Spleen (tissue), 13 donors: ENCODE measurements at regions of chr9 and their contacts with region 1.

Region 1: GRCh38 chr9:134325817-134326723 is at the start of gene RXRA:
- DNase-seq: peak; percentile 94
- H3K4me3 ChIP-seq: peak within 1 kb of the TSS; percentile 53 to 86 (median 68)
- H3K27ac ChIP-seq: peak within 1 kb of the TSS; percentile 58 to 93 (median 88)
- H3K4me1 ChIP-seq: peaks cover 12 to 78% (median 56%) of the 10 kb centered on the region in 6 donors
- H3K27me3 ChIP-seq: peaks cover 0 to 6% (median 0%) of the 10 kb centered on the region in 7 donors
- CTCF ChIP-seq: peak in 6 of 11 experiments; percentile 18 to 52 (median 40)
- POLR2A ChIP-seq: peak in 1 of 3 donors; percentile 69
- total RNA-seq, gene RXRA: 67.7 to 116 (median 95.6) TPM

Region 2: GRCh38 chr9:134178768-134179551 is 147.1 kb before region 1 on chr9:
- intact Hi-C with region 1: loop called (anchors 10 kb)
- DNase-seq: peak; percentile 64
- H3K4me3 ChIP-seq: no peak overlapping the region
- H3K27ac ChIP-seq: peak overlapping the region in 5 of 8 donors; percentile 16 to 39 (median 22)
- H3K4me1 ChIP-seq: peaks cover 17 to 30% (median 24%) of the 10 kb centered on the region in 6 donors
- H3K27me3 ChIP-seq: peaks cover 0 to 74% (median 13%) of the 10 kb centered on the region in 7 donors
- CTCF ChIP-seq: no peak
- POLR2A ChIP-seq: no peak

Region 3: GRCh38 chr9:134847752-134848447 is 521.8 kb after region 1 on chr9:
- intact Hi-C with region 1: no loop called
- DNase-seq: no peak
- H3K4me3 ChIP-seq: no peak overlapping the region
- H3K27ac ChIP-seq: no peak overlapping the region
- H3K4me1 ChIP-seq: peaks cover 0 to 7% (median 0%) of the 10 kb centered on the region in 6 donors
- H3K27me3 ChIP-seq: no peaks in the 10 kb centered on the region
- CTCF ChIP-seq: no peak
- POLR2A ChIP-seq: no peak